CD8-positive, alpha-beta T cell (primary cell): ENCODE measurements at regions of chr6 and their contacts with region 1.

Region 1: GRCh38 chr6:31702819-31703522 is at the start of gene ABHD16A:
- DNase-seq: peak; percentile 93 to 99 (median 98)
- ATAC-seq: peak; percentile 93
- H3K4me3 ChIP-seq: peak within 1 kb of the TSS; percentile 83 to 98
- H3K4me3 Mint-ChIP-seq: peak within 1 kb of the TSS; percentile 99
- H3K27ac ChIP-seq: peak within 1 kb of the TSS; percentile 91 to 100
- H3K27ac Mint-ChIP-seq: peak within 1 kb of the TSS; percentile 92
- H3K4me1 ChIP-seq: peaks cover 22% of the 10 kb centered on the region
- H3K4me1 Mint-ChIP-seq: peaks cover 36% of the 10 kb centered on the region
- H3K27me3 ChIP-seq: no peaks in the 10 kb centered on the region
- H3K27me3 Mint-ChIP-seq: no peaks in the 10 kb centered on the region
- CTCF ChIP-seq: no peak
- total RNA-seq, gene ABHD16A: 79.6 to 81.6 TPM

Region 2: GRCh38 chr6:31525932-31526591 is 176.9 kb before region 1 on chr6:
- CTCF ChIA-PET with region 1: no interaction called
- POLR2A ChIA-PET with region 1: no interaction called
- intact Hi-C with region 1: no loop called
- DNase-seq: peak in 1 of 9 experiments; percentile 35
- ATAC-seq: no peak
- H3K4me3 ChIP-seq: no peak overlapping the region
- H3K4me3 Mint-ChIP-seq: no peak overlapping the region
- H3K27ac ChIP-seq: no peak overlapping the region
- H3K27ac Mint-ChIP-seq: no peak overlapping the region
- H3K4me1 ChIP-seq: no peaks in the 10 kb centered on the region
- H3K4me1 Mint-ChIP-seq: peaks cover 2% of the 10 kb centered on the region
- H3K27me3 ChIP-seq: no peaks in the 10 kb centered on the region
- H3K27me3 Mint-ChIP-seq: no peaks in the 10 kb centered on the region
- CTCF ChIP-seq: no peak

Region 3: GRCh38 chr6:31619805-31620585 is 83.0 kb before region 1 on chr6:
- CTCF ChIA-PET with region 1: no interaction called
- POLR2A ChIA-PET with region 1: no interaction called
- intact Hi-C with region 1: loop called in 1 of 2 experiments (anchors 2 kb)
- DNase-seq: peak; percentile 94 to 99 (median 96)
- ATAC-seq: peak; percentile 80
- H3K4me3 ChIP-seq: peak overlapping the region; percentile 83 to 96
- H3K4me3 Mint-ChIP-seq: peak overlapping the region; percentile 91
- H3K27ac ChIP-seq: peak overlapping the region; percentile 95 to 99
- H3K27ac Mint-ChIP-seq: peak overlapping the region; percentile 96
- H3K4me1 ChIP-seq: peaks cover 37% of the 10 kb centered on the region
- H3K4me1 Mint-ChIP-seq: peaks cover 52% of the 10 kb centered on the region
- H3K27me3 ChIP-seq: no peaks in the 10 kb centered on the region
- H3K27me3 Mint-ChIP-seq: no peaks in the 10 kb centered on the region
- CTCF ChIP-seq: no peak

Region 4: DNA sequence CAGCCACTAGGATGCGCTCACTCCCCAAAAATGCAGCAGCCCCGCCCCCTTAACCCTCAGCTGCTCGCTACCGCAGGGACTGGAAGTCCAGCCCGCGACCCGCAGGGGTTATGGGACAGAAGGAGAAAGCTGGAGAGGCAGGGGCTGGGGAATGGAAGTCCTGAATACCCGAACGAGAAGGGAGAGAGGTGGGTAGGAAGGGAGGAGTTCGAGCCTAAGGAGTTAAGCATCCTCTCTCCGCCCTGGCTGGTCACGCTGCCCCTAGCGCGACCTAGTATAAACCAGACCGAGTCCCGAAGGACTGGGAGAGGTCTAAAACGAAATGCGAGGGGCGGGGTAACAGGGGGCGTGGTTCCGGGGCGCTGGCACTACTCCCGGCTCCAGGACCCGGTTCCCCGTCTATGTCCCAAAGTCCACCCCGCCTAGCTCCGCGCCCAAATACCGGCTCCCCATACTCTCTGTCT is 26.6 kb after region 1 on chr6:
- CTCF ChIA-PET with region 1: interaction called, 4 read pairs
- POLR2A ChIA-PET with region 1: interaction called, 7 read pairs
- intact Hi-C with region 1: loop called in 1 of 2 experiments (anchors 2 kb)
- DNase-seq: peak; percentile 60 to 89 (median 83)
- ATAC-seq: peak; percentile 69
- H3K4me3 ChIP-seq: peak overlapping the region; percentile 79 to 96
- H3K4me3 Mint-ChIP-seq: peak overlapping the region; percentile 97
- H3K27ac ChIP-seq: peak overlapping the region; percentile 11 to 58
- H3K27ac Mint-ChIP-seq: peak overlapping the region; percentile 89
- H3K4me1 ChIP-seq: peaks cover 35% of the 10 kb centered on the region
- H3K4me1 Mint-ChIP-seq: peaks cover 57% of the 10 kb centered on the region
- H3K27me3 ChIP-seq: no peaks in the 10 kb centered on the region
- H3K27me3 Mint-ChIP-seq: no peaks in the 10 kb centered on the region
- CTCF ChIP-seq: peak; percentile 91

Region 5: DNA sequence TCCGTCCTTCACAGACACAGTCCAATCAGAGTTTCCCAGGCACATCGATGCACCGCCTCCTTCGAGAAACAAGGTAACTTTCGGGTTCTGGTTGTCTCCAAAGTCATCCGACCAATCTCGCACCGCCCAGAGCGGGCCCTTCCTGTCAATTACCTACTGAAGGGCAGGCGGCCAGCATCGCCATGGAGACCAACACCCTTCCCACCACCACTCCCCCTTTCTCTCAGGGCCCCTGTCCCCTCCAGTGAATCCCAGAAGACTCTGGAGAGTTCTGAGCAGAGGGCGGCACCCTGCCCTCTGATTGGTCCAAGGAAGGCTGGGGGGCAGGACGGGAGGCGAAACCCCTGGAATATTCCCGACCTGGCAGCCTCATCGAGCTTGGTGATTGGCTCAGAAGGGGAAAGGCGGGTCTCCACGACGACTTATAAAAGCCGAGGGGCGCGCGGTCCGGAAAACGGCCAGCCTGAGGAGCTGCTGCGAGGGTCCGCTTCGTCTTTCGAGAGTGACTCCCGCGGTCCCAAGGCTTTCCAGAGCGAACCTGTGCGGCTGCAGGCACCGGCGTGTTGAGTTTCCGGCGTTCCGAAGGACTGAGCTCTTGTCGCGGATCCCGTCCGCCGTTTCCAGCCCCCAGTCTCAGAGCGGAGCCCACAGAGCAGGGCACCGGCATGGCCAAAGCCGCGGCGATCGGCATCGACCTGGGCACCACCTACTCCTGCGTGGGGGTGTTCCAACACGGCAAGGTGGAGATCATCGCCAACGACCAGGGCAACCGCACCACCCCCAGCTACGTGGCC is 124.5 kb after region 1 on chr6 and contains the start of gene HSPA1B:
- CTCF ChIA-PET with region 1: no interaction called
- POLR2A ChIA-PET with region 1: interaction called, 7 read pairs
- intact Hi-C with region 1: loop called in 1 of 2 experiments (anchors 1 kb)
- DNase-seq: peak; percentile 56 to 91 (median 85)
- ATAC-seq: peak; percentile 63
- H3K4me3 ChIP-seq: peak within 1 kb of the TSS; percentile 60 to 95
- H3K4me3 Mint-ChIP-seq: peak within 1 kb of the TSS; percentile 96
- H3K27ac ChIP-seq: peak within 1 kb of the TSS; percentile 66 to 72
- H3K27ac Mint-ChIP-seq: peak within 1 kb of the TSS; percentile 94
- H3K4me1 ChIP-seq: peaks cover 25% of the 10 kb centered on the region
- H3K4me1 Mint-ChIP-seq: peaks cover 38% of the 10 kb centered on the region
- H3K27me3 ChIP-seq: no peaks in the 10 kb centered on the region
- H3K27me3 Mint-ChIP-seq: no peaks in the 10 kb centered on the region
- CTCF ChIP-seq: no peak
- total RNA-seq, gene HSPA1B: 4.9 to 5.2 TPM

Region 6: DNA sequence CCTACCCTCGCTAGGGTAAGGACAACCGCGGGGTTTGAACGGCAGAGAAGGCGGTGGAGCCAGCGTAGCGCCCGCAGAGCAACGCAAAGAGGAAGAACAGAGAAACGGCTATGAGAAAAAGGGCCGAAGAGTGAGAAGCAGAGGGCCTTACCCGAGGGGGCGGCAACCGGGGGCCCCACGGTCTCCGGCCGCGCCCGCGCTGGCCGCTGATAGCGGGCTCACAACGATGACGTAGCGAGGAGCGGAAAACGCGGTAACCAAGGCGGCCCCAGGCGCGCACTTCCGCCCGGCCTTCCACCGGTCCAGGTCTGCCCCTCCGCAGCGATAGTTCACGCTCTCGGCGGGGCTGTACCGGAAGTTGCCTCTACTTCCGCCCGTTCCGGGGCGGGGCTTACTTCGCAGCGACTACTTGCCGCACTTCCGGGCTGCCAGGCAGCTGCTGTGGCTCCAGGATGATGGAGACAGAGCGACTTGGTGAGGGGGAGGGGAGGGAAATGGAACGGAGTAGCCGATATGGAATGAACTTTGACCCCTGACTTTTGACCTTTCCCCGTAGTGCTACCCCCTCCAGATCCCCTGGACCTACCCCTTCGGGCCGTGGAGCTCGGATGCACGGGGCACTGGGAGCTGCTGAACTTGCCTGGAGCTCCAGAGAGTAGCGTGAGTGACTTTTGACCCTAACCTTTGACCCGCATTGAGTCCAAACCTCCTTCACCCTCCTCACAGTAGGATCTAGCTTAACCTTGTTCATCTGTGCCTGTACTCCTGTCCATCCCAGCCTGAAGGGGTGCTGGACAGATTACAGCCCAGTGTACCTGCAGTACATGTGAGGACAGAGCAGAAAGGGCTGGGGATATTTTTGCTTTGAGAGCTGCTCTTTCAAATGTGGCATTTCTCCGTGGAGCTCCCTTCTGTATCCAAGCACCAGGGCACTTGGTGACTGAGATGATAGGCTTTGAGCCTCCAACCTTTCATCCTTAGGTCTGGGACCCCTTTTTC is 256.1 kb after region 1 on chr6 and contains the starts of genes NELFE and SKIC2:
- CTCF ChIA-PET with region 1: no interaction called
- POLR2A ChIA-PET with region 1: no interaction called
- intact Hi-C with region 1: loop called in 1 of 2 experiments (anchors 2 kb)
- DNase-seq: peak; percentile 97 to 99 (median 99)
- ATAC-seq: peak; percentile 98
- H3K4me3 ChIP-seq: peak within 1 kb of the TSS; percentile 85 to 91
- H3K4me3 Mint-ChIP-seq: peak within 1 kb of the TSS; percentile 95
- H3K27ac ChIP-seq: peak within 1 kb of the TSS; percentile 97 to 99
- H3K27ac Mint-ChIP-seq: peak within 1 kb of the TSS; percentile 97
- H3K4me1 ChIP-seq: peaks cover 25% of the 10 kb centered on the region
- H3K4me1 Mint-ChIP-seq: peaks cover 39% of the 10 kb centered on the region
- H3K27me3 ChIP-seq: no peaks in the 10 kb centered on the region
- H3K27me3 Mint-ChIP-seq: no peaks in the 10 kb centered on the region
- CTCF ChIP-seq: no peak
- total RNA-seq, gene NELFE: 50.4 to 55.1 TPM
- total RNA-seq, gene SKIC2: 107 to 115 TPM

Region 7: GRCh38 chr6:32529697-32530429 is 826.9 kb after region 1 on chr6 and contains the start of gene HLA-DRB5:
- CTCF ChIA-PET with region 1: no interaction called
- POLR2A ChIA-PET with region 1: no interaction called
- intact Hi-C with region 1: no loop called
- DNase-seq: peak in 3 of 9 experiments; percentile 4 to 61 (median 51)
- ATAC-seq: peak; percentile 66
- H3K4me3 ChIP-seq: peak within 1 kb of the TSS in 1 of 2 experiments; percentile 50
- H3K4me3 Mint-ChIP-seq: peak within 1 kb of the TSS; percentile 78
- H3K27ac ChIP-seq: peak within 1 kb of the TSS in 1 of 2 experiments; percentile 56
- H3K27ac Mint-ChIP-seq: peak within 1 kb of the TSS; percentile 32
- H3K4me1 ChIP-seq: no peaks in the 10 kb centered on the region
- H3K4me1 Mint-ChIP-seq: peaks cover 5% of the 10 kb centered on the region
- H3K27me3 ChIP-seq: no peaks in the 10 kb centered on the region
- H3K27me3 Mint-ChIP-seq: peaks cover 4% of the 10 kb centered on the region
- CTCF ChIP-seq: no peak
- total RNA-seq, gene HLA-DRB5: 9.3 to 10.1 TPM